Aorta (tissue), 5 donors: ENCODE measurements at regions of chr10 and their contacts with region 1.

Region 1: GRCh38 chr10:62095181-62096071 is 173.2 kb downstream of the RTKN2 start:
- DNase-seq: no peak
- ATAC-seq: peak; percentile 64
- H3K4me3 ChIP-seq: no peak overlapping the region
- H3K27ac ChIP-seq: peak overlapping the region in 1 of 2 donors; percentile 58
- H3K4me1 ChIP-seq: peaks cover 0 to 17% of the 10 kb centered on the region in 2 donors
- H3K27me3 ChIP-seq: no peaks in the 10 kb centered on the region

Region 2: DNA sequence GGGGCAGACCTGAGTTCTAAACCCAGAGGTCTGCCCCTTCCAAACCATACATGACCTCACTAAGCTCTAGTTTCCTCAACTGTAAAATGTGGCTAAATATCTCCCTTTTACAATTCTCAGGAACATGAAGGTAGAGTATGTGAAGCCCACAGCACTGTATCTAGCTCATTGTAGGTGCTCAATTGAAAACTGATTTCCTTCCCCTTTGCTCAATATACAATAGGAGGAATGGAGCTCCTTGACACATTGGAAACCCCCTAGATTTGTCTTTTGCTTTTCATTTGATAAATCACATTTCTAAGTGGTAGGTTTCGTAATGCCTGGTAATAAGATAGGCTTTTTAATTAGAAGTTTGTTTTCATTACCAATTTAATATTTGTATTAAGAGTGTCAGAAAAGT is 40.6 kb before region 1 on chr10:
- intact Hi-C with region 1: loop called in 1 of 2 experiments (anchors 5 kb)
- DNase-seq: no peak
- ATAC-seq: no peak
- H3K4me3 ChIP-seq: peak overlapping the region; percentile 26 to 40
- H3K27ac ChIP-seq: peak overlapping the region in 1 of 2 donors; percentile 82
- H3K4me1 ChIP-seq: peaks cover 13 to 25% of the 10 kb centered on the region in 2 donors
- H3K27me3 ChIP-seq: no peaks in the 10 kb centered on the region